Mammary epithelial cell (primary cell): ENCODE measurements at regions of chr3 and their contacts with region 1.

Region 1: GRCh38 chr3:8111069-8111798 is 390.4 kb upstream of the LMCD1 start:
- DNase-seq: peak; percentile 72
- H3K4me3 ChIP-seq: no peak overlapping the region
- H3K27ac ChIP-seq: no peak overlapping the region
- H3K4me1 ChIP-seq: no peaks in the 10 kb centered on the region
- H3K27me3 ChIP-seq: peaks cover 1% of the 10 kb centered on the region
- CTCF ChIP-seq: peak; percentile 69 to 78

Region 2: DNA sequence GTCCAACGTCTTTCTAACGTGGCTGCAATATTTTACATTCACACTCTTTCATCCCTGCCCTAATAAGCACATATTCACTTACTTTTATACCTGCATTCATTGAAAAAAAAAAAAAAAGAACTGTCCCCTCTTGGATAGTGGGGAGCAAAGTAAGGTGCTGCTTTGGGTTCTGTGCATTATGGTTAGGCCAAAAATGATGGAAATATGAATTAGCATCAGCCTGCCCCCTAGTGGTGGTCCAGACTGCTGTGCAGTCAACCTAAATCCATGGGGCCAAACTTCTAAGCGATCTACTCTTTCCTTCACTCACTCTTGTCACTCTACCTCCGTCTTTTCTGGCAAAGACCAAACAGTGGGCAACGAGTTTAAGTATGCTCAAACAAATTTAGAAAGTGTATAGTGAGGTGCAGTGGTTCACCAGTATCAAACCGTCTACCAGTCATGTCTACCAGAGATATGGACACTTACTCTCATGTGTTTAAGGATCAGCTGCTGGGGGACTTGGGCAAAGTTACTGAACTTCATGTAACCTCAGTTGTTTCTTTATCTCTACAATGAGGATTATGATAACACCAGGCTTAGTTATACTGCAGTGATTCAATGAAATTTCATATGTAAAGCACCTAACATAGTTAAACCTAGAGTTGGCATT is 1311.8 kb before region 1 on chr3:
- CTCF ChIA-PET with region 1: no interaction called
- dilution Hi-C with region 1: no loop called
- in situ Hi-C with region 1: no loop called
- intact Hi-C with region 1: loop called (anchors 10 kb)
- DNase-seq: peak; percentile 18
- H3K4me3 ChIP-seq: no peak overlapping the region
- H3K27ac ChIP-seq: no peak overlapping the region
- H3K4me1 ChIP-seq: no peaks in the 10 kb centered on the region
- H3K27me3 ChIP-seq: no peaks in the 10 kb centered on the region
- CTCF ChIP-seq: peak; percentile 88 to 94

Region 3: GRCh38 chr3:7285505-7285904 is 825.7 kb before region 1 on chr3:
- CTCF ChIA-PET with region 1: no interaction called
- dilution Hi-C with region 1: no loop called
- in situ Hi-C with region 1: no loop called
- intact Hi-C with region 1: loop called (anchors 1 kb)
- DNase-seq: peak; percentile 9
- H3K4me3 ChIP-seq: no peak overlapping the region
- H3K27ac ChIP-seq: no peak overlapping the region
- H3K4me1 ChIP-seq: no peaks in the 10 kb centered on the region
- H3K27me3 ChIP-seq: no peaks in the 10 kb centered on the region
- CTCF ChIP-seq: peak; percentile 20 to 38

Region 4: DNA sequence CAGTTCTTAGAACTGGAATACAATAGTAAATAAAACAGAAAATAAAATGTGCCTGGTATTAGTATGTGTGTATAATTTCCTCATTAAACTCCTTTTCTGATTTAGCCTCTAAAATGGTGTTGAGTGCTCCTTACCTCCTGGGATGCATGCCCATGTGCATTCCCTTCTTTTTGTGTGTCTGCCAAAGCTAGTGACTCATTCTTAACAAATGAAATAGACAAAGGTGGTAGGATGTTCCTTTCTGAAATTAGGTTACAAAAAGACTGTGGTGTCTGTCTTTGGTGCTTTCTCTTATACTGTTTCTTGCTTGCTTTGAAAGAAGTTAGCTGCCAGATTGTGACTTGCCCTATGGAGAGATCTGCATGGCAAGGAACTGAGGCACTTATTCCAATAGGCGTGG is 626.6 kb before region 1 on chr3:
- CTCF ChIA-PET with region 1: no interaction called
- dilution Hi-C with region 1: no loop called
- in situ Hi-C with region 1: no loop called
- intact Hi-C with region 1: loop called (anchors 5 kb)
- DNase-seq: peak; percentile 73
- H3K4me3 ChIP-seq: no peak overlapping the region
- H3K27ac ChIP-seq: peak overlapping the region; percentile 32
- H3K4me1 ChIP-seq: peaks cover 14% of the 10 kb centered on the region
- H3K27me3 ChIP-seq: no peaks in the 10 kb centered on the region
- CTCF ChIP-seq: no peak

Region 5: DNA sequence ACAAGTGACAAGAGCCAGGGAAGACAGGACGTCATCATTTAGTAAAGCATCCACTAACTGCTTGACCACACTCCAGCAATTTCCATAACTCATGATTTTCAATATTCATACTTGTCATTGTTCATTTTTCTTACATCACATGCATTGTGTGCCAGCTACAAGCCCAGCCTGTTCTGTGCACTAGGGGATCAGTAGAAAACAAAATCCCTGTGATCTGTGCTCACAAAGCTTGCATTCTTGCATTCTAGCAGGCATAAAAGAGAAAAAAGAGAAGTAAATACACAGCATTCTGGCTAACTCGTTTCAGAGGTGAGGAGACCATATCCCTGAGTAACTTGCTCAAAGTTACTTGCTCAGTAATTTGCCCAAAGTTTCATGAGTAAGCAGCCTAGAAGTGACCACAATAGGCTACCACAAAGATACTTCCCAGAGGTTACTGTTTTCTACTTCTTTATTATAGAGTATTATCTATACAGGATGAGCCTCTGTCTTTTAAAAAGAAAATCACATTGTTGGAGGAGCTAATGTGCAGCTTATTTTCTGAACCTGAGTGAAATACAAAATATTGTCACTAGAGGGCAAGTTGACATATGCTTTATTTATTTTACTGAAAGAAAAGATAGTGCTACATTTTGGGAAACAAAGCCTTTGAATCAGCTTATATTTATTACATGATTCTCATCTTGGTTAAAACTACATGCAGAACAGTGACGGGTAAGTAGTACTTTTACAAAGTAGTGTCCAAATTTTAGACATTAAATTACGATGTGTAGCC is 311.0 kb before region 1 on chr3:
- CTCF ChIA-PET with region 1: no interaction called
- dilution Hi-C with region 1: no loop called
- in situ Hi-C with region 1: no loop called
- intact Hi-C with region 1: loop called (anchors 5 kb)
- DNase-seq: no peak
- H3K4me3 ChIP-seq: no peak overlapping the region
- H3K27ac ChIP-seq: no peak overlapping the region
- H3K4me1 ChIP-seq: no peaks in the 10 kb centered on the region
- H3K27me3 ChIP-seq: no peaks in the 10 kb centered on the region
- CTCF ChIP-seq: no peak

Region 6: GRCh38 chr3:8416965-8417364 is 305.7 kb after region 1 on chr3:
- CTCF ChIA-PET with region 1: interaction called, 3 read pairs
- dilution Hi-C with region 1: no loop called
- in situ Hi-C with region 1: no loop called
- intact Hi-C with region 1: loop called (anchors 5 kb)
- DNase-seq: peak; percentile 31
- H3K4me3 ChIP-seq: peak overlapping the region in 2 of 3 experiments; percentile 14 to 15
- H3K27ac ChIP-seq: no peak overlapping the region
- H3K4me1 ChIP-seq: no peaks in the 10 kb centered on the region
- H3K27me3 ChIP-seq: no peaks in the 10 kb centered on the region
- CTCF ChIP-seq: no peak